ENCODE measurements at regions of chr14 and their contacts with region 1.

Region 1: GRCh38 chr14:54566410-54567223 is at the start of gene SAMD4A:
- DNase-seq: peak; percentile 63
- ATAC-seq: peak; percentile 30
- H3K4me3 Mint-ChIP-seq: peak within 1 kb of the TSS; percentile 99
- H3K27ac Mint-ChIP-seq: peak within 1 kb of the TSS; percentile 96
- H3K4me1 Mint-ChIP-seq: peaks cover 28% of the 10 kb centered on the region
- H3K27me3 Mint-ChIP-seq: peaks cover 4% of the 10 kb centered on the region
- CTCF ChIP-seq: no peak
- total RNA-seq, gene SAMD4A: 6.4 and 8.7 TPM in 2 replicates

Region 2: GRCh38 chr14:53613404-53614253 is 953.0 kb before region 1 on chr14:
- CTCF ChIA-PET with region 1: no interaction called
- POLR2A ChIA-PET with region 1: no interaction called
- intact Hi-C with region 1: loop called (anchors 5 kb)
- DNase-seq: peak; percentile 59
- ATAC-seq: peak; percentile 93
- H3K4me3 Mint-ChIP-seq: peak overlapping the region; percentile 79
- H3K27ac Mint-ChIP-seq: peak overlapping the region; percentile 100
- H3K4me1 Mint-ChIP-seq: peaks cover 53% of the 10 kb centered on the region
- H3K27me3 Mint-ChIP-seq: no peaks in the 10 kb centered on the region
- CTCF ChIP-seq: no peak

Region 3: GRCh38 chr14:54509546-54510501 is 56.8 kb before region 1 on chr14 and contains the start of gene CGRRF1:
- CTCF ChIA-PET with region 1: interaction called, 5 read pairs
- POLR2A ChIA-PET with region 1: interaction called, 8 read pairs
- intact Hi-C with region 1: loop called (anchors 1 kb)
- DNase-seq: peak; percentile 98
- ATAC-seq: peak; percentile 98
- H3K4me3 Mint-ChIP-seq: peak within 1 kb of the TSS; percentile 95
- H3K27ac Mint-ChIP-seq: peak within 1 kb of the TSS; percentile 89
- H3K4me1 Mint-ChIP-seq: peaks cover 41% of the 10 kb centered on the region
- H3K27me3 Mint-ChIP-seq: no peaks in the 10 kb centered on the region
- CTCF ChIP-seq: no peak
- total RNA-seq, gene CGRRF1: 11.9 and 14.1 TPM in 2 replicates

Region 4: GRCh38 chr14:54722781-54723432 is 156.3 kb after region 1 on chr14:
- CTCF ChIA-PET with region 1: interaction called, 32 read pairs
- POLR2A ChIA-PET with region 1: interaction called, 8 read pairs
- intact Hi-C with region 1: loop called (anchors 1 kb)
- DNase-seq: no peak
- ATAC-seq: peak; percentile 70
- H3K4me3 Mint-ChIP-seq: no peak overlapping the region
- H3K27ac Mint-ChIP-seq: no peak overlapping the region
- H3K4me1 Mint-ChIP-seq: peaks cover 6% of the 10 kb centered on the region
- H3K27me3 Mint-ChIP-seq: no peaks in the 10 kb centered on the region
- CTCF ChIP-seq: no peak

Region 5: GRCh38 chr14:54857830-54858269 is 291.2 kb after region 1 on chr14:
- CTCF ChIA-PET with region 1: no interaction called
- POLR2A ChIA-PET with region 1: interaction called, 3 read pairs
- intact Hi-C with region 1: loop called (anchors 1 kb)
- DNase-seq: no peak
- ATAC-seq: peak; percentile 93
- H3K4me3 Mint-ChIP-seq: peak overlapping the region; percentile 15
- H3K27ac Mint-ChIP-seq: peak overlapping the region; percentile 50
- H3K4me1 Mint-ChIP-seq: peaks cover 50% of the 10 kb centered on the region
- H3K27me3 Mint-ChIP-seq: no peaks in the 10 kb centered on the region
- CTCF ChIP-seq: no peak

Region 6: DNA sequence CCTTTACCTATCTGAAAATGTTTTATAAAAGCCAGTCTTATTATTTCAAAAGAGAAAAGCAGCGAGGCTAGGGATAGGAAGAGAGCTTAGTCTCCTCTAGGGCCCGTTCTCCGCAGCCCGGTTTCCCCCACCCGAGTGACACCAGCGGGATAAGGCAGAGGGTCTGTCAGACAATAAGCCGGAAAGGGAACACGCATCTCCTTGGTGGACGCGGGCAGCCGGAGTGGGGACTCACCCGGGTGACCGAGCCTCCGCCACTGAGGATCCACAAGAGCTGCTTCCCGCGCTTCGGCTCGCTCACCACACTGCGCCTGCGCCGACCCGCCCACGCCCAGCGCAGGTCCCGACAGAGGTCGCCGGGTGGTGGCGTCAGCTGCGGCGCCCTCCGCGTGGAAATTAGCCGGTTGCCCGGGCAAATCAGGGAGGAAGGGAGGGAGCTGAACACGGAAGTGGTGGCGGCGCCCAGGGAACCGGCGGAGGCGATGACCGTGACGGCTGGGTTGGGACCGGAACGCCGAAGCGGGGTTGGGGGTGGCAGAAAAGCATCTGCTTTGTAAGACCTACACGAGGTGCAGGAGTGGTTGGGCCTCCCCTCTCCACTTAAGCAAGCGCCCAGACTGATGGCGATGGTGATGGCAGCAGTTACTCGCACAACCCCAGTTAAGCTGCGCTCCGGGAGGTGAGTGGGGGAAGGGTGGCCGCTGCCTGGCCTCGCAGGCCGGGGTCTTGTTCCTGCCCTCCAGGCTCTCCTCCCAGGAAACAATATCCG is 460.4 kb after region 1 on chr14 and contains the starts of genes SOCS4 and WDHD1:
- CTCF ChIA-PET with region 1: no interaction called
- POLR2A ChIA-PET with region 1: no interaction called
- intact Hi-C with region 1: loop called (anchors 2 kb)
- DNase-seq: peak; percentile 99
- ATAC-seq: peak; percentile 92
- H3K4me3 Mint-ChIP-seq: peak within 1 kb of the TSS; percentile 95
- H3K27ac Mint-ChIP-seq: peak within 1 kb of the TSS; percentile 92
- H3K4me1 Mint-ChIP-seq: peaks cover 50% of the 10 kb centered on the region
- H3K27me3 Mint-ChIP-seq: no peaks in the 10 kb centered on the region
- CTCF ChIP-seq: no peak
- total RNA-seq, gene SOCS4: 29.2 and 30.3 TPM in 2 replicates
- total RNA-seq, gene WDHD1: 9.3 and 9.5 TPM in 2 replicates

Region 7: DNA sequence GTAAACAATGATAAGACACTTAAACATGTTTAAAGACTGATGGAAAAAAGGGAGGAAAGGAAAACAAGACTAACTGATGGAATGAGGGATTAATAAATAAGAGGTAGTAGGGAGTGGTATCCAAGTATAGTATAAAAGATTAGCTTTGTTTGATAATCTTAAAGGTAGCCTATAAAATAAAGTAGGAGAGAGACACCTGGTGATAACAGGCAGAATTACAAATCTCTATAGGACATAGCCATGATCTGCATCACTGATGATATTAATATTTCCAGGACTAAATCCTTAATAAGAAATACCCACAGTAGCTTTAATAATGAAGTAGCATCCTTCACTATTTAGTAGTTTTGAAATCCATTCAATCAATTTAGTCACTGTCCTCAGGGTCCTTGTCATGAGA is 594.4 kb after region 1 on chr14:
- CTCF ChIA-PET with region 1: interaction called, 3 read pairs
- POLR2A ChIA-PET with region 1: no interaction called
- intact Hi-C with region 1: loop called (anchors 1 kb)
- DNase-seq: no peak
- ATAC-seq: peak; percentile 75
- H3K4me3 Mint-ChIP-seq: no peak overlapping the region
- H3K27ac Mint-ChIP-seq: no peak overlapping the region
- H3K4me1 Mint-ChIP-seq: peaks cover 2% of the 10 kb centered on the region
- H3K27me3 Mint-ChIP-seq: no peaks in the 10 kb centered on the region
- CTCF ChIP-seq: no peak